Heart right ventricle (tissue), 16 donors: ENCODE measurements at regions of chr14 and their contacts with region 1.

Region 1: GRCh38 chr14:67704484-67705089 is 2.9 kb downstream of the RDH12 start:
- DNase-seq: peak in 1 of 2 donors; percentile 16
- ATAC-seq: peak in 7 of 8 donors; percentile 58 to 85 (median 77)
- H3K4me3 ChIP-seq: no peak overlapping the region
- H3K27ac ChIP-seq: no peak overlapping the region
- H3K4me1 ChIP-seq: peaks cover 0 to 4% (median 0%) of the 10 kb centered on the region in 9 donors
- H3K27me3 ChIP-seq: no peaks in the 10 kb centered on the region
- CTCF ChIP-seq: peak; percentile 45 to 87 (median 76)

Region 2: GRCh38 chr14:67526676-67527459 is 177.7 kb before region 1 on chr14:
- intact Hi-C with region 1: loop called in 3 of 10 experiments (anchors 5 to 10 kb)
- DNase-seq: peak in 1 of 2 donors; percentile 22
- ATAC-seq: peak in 7 of 8 donors; percentile 40 to 81 (median 66)
- H3K4me3 ChIP-seq: no peak overlapping the region
- H3K27ac ChIP-seq: no peak overlapping the region
- H3K4me1 ChIP-seq: peaks cover 0 to 6% (median 0%) of the 10 kb centered on the region in 9 donors
- H3K27me3 ChIP-seq: peaks cover 0 to 57% (median 18%) of the 10 kb centered on the region in 7 donors
- CTCF ChIP-seq: peak; percentile 31 to 74 (median 63)

Region 3: DNA sequence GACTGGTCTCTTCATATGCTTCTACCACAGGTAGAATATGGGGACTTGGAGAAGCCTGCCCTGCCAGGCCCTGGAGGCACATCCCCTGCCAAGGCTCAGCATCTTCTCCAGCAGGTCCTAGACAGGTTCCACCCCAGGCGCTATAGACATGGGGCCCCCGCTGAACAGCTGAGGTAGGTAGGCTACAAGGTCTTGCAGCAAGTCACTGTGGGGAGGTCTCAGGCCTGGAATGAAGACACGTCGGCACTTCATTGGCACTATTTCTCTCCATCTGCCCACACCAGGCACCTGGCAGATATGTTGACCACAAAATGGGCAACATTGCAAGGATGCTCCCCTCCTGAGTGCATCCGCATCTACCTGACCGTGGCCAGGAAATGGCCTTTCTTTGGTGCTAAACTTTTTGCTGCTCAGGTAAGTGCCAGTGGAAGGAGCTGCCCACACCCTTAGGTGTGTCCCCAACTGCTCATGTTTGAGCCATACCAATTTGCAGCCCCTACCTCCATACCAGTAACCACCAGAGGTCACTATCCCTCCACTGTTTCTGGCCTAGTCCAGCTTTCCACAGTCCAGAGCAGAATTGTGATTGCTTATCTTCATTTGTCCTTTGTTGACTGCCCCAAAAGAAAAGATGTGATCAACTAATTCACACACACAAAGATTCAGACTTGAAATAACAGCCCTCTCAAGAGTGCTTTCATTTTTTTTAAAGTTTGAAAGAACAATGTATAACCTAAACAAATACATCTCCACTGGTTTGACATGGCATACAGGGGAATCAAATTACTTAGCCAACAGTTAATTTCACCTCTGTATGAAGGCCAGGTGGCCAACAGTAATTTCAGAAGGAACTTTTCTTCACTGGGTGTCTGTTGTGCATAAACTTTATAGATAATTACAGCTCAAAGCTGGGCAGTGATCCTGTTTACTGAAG is 120.6 kb before region 1 on chr14:
- intact Hi-C with region 1: loop called (anchors 1 to 10 kb)
- DNase-seq: peak in 1 of 2 donors; percentile 32
- ATAC-seq: peak; percentile 53 to 84 (median 78)
- H3K4me3 ChIP-seq: no peak overlapping the region
- H3K27ac ChIP-seq: no peak overlapping the region
- H3K4me1 ChIP-seq: no peaks in the 10 kb centered on the region
- H3K27me3 ChIP-seq: no peaks in the 10 kb centered on the region
- CTCF ChIP-seq: peak; percentile 33 to 70 (median 63)

Region 4: DNA sequence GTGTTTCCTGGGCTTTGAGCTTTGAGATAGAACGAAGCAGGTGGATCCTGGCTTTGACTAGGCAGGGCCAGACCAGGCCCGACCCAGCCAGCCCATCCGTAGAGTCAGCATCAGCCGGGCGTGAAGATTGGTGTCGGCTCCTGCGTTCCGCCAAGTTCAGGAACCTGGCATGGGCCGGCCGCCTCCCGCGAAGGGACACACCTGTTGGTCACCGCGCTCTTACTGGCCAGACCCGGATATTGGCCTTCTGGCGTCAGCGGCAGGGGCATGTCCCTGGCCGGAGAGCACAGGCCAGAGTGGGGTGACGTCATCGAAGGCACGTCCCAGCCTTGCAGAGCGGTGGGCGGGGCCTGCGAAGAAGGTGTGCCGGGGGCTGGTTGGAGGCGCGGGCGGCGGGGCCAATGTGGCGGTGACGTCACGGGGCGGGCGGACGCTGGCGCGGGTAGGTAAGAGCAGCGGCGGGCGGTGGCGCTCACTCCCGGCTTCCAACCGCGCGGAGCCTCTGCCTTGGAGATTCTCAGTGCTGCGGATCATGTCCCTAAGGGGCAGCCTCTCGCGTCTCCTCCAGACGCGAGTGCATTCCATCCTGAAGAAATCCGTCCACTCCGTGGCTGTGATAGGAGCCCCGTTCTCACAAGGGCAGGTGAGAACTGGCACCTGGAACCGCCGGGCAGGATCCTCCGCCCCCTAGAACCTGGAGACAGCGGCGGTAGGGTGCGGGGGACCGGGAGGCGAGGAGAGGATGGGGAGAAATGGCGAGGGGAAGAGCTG is 85.0 kb before region 1 on chr14 and contains the start of gene ARG2:
- intact Hi-C with region 1: loop called in 9 of 10 experiments (anchors 1 to 10 kb)
- DNase-seq: peak; percentile 95 to 97
- ATAC-seq: peak; percentile 97 to 99 (median 99)
- H3K4me3 ChIP-seq: peak within 1 kb of the TSS; percentile 36 to 74 (median 68)
- H3K27ac ChIP-seq: peak within 1 kb of the TSS in 5 of 10 donors; percentile 16 to 55 (median 54)
- H3K4me1 ChIP-seq: peaks cover 0 to 36% (median 12%) of the 10 kb centered on the region in 9 donors
- H3K27me3 ChIP-seq: peaks cover 0 to 5% (median 0%) of the 10 kb centered on the region in 7 donors
- CTCF ChIP-seq: peak in 3 of 9 donors; percentile 21 to 31 (median 28)
- total RNA-seq, gene ARG2: 0.69 to 11.6 (median 1.5) TPM